ENCODE measurements at regions of chr1 and their contacts with region 1.

Region 1: DNA sequence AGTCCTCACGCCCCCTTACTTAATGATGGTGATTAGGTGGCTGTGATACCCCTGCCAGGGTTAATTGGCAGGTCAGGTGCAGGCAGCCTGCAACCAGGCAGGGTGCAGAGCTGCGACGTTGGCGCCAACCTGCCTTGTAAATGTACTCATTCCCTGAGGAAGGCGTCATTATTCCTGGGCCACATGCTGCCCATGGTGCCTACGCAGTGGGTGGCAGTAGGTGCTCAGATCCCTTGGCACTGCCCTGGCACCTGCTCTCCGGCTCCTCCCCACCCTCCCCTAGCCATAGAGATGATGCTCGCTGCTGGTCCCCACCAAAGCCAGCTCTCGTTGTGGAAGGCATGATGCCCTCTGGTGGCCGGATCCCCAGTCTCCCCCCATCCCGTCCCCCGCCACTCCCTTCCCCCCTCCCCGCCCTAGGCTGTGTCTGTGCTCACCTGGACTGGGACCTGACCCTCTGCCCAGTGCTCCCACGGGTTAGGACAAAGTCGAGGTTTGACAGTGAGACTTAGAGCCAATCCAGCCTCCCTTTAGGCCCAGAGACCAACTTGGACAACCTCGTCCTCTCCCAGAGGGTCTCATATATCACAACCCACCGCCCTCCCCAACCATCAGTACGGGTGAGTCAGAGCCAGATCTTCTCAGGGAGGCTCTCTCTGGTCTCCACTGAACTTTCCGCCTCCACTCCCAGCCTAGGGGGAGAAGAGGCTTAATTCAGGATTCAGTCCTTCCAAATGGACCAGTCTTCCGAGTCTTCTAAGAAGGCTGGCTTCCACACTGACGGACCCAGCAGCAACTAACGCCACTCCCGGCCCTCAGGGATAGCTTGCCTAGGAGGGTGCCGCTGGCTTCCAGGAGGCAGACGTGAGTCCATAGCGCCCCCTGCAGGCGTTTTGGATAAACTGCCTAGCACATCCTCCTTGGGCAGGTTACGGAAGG is 5.7 kb downstream of the KRTCAP2 start:
- DNase-seq: no peak
- ATAC-seq: peak; percentile 93
- H3K4me3 ChIP-seq: no peak overlapping the region
- H3K27ac ChIP-seq: no peak overlapping the region
- H3K4me1 ChIP-seq: peaks cover 9% of the 10 kb centered on the region
- H3K27me3 ChIP-seq: no peaks in the 10 kb centered on the region
- CTCF ChIP-seq: peak; percentile 88 to 98 (median 94)
- EP300 ChIP-seq: no peak
- POLR2A ChIP-seq: no peak
- RAD21 ChIP-seq: peak; percentile 96

Region 2: GRCh38 chr1:155084722-155085503 is 82.5 kb before region 1 on chr1:
- CTCF ChIA-PET with region 1: interaction called, 284 read pairs
- POLR2A ChIA-PET with region 1: interaction called, 10 read pairs
- RAD21 ChIA-PET with region 1: interaction called, 71 read pairs
- SMC1A ChIA-PET with region 1: interaction called, 8 read pairs
- in situ Hi-C with region 1: loop called (anchors 5 kb)
- intact Hi-C with region 1: no loop called
- DNase-seq: peak; percentile 72
- ATAC-seq: peak; percentile 90
- H3K4me3 ChIP-seq: peak overlapping the region; percentile 72
- H3K27ac ChIP-seq: peak overlapping the region; percentile 72
- H3K4me1 ChIP-seq: peaks cover 33% of the 10 kb centered on the region
- H3K27me3 ChIP-seq: peaks cover 17 to 23% of the 10 kb centered on the region in 2 experiments
- CTCF ChIP-seq: peak; percentile 90 to 99 (median 95)
- EP300 ChIP-seq: 0 out of 4 replicates have a peak, but pooled peaks of 1 of the 2 experiments have one; percentile 48
- POLR2A ChIP-seq: no peak; the same call in 1 of the 2 replicates
- RAD21 ChIP-seq: peak; percentile 99

Region 3: GRCh38 chr1:155091071-155091709 is 76.2 kb before region 1 on chr1:
- CTCF ChIA-PET with region 1: interaction called, 284 read pairs
- POLR2A ChIA-PET with region 1: interaction called, 10 read pairs
- RAD21 ChIA-PET with region 1: interaction called, 71 read pairs
- SMC1A ChIA-PET with region 1: interaction called, 37 read pairs
- in situ Hi-C with region 1: loop called (anchors 5 kb)
- intact Hi-C with region 1: loop called (anchors 1 kb)
- DNase-seq: no peak
- ATAC-seq: peak; percentile 88
- H3K4me3 ChIP-seq: no peak overlapping the region
- H3K27ac ChIP-seq: no peak overlapping the region
- H3K4me1 ChIP-seq: peaks cover 6% of the 10 kb centered on the region
- H3K27me3 ChIP-seq: peaks cover 0 to 2% of the 10 kb centered on the region in 2 experiments; a peak in 1 of 4 replicates
- CTCF ChIP-seq: peak; percentile 85 to 98 (median 97)
- EP300 ChIP-seq: no peak
- POLR2A ChIP-seq: no peak
- RAD21 ChIP-seq: peak; percentile 79

Region 4: DNA sequence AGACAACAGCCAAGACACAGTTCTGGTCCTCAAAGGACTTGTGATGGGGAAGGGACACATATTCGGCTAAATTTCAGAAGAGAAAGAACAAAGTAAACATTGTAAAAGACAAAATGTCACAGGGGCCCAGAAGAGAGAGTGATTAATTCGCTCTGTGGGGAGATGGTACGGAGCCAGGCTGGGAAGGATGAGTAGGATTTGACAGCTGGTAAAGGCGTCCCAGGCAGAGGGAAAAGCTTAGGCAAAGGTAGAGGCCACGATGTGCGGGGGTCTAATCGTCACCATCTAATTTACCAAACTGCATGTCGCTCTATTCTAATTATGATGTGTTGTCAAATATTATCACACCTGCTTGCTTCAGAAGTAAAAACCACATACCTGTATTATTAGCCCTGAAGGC is 57.1 kb before region 1 on chr1:
- CTCF ChIA-PET with region 1: interaction called, 11 read pairs
- POLR2A ChIA-PET with region 1: no interaction called
- RAD21 ChIA-PET with region 1: interaction called, 5 read pairs
- SMC1A ChIA-PET with region 1: interaction called, 6 read pairs
- in situ Hi-C with region 1: no loop called
- intact Hi-C with region 1: no loop called
- DNase-seq: no peak
- ATAC-seq: no peak
- H3K4me3 ChIP-seq: no peak overlapping the region
- H3K27ac ChIP-seq: no peak overlapping the region
- H3K4me1 ChIP-seq: no peaks in the 10 kb centered on the region
- H3K27me3 ChIP-seq: no peaks in the 10 kb centered on the region
- CTCF ChIP-seq: no peak
- EP300 ChIP-seq: no peak
- POLR2A ChIP-seq: no peak
- RAD21 ChIP-seq: no peak

Region 5: GRCh38 chr1:155117617-155118016 is 49.8 kb before region 1 on chr1:
- CTCF ChIA-PET with region 1: interaction called, 10 read pairs
- POLR2A ChIA-PET with region 1: no interaction called
- RAD21 ChIA-PET with region 1: interaction called, 5 read pairs
- SMC1A ChIA-PET with region 1: interaction called, 6 read pairs
- in situ Hi-C with region 1: no loop called
- intact Hi-C with region 1: no loop called
- DNase-seq: no peak
- ATAC-seq: no peak
- H3K4me3 ChIP-seq: no peak overlapping the region
- H3K27ac ChIP-seq: no peak overlapping the region
- H3K4me1 ChIP-seq: peaks cover 5% of the 10 kb centered on the region; the same call in 1 of the 2 replicates
- H3K27me3 ChIP-seq: peaks cover 0 to 2% of the 10 kb centered on the region in 2 experiments; a peak in 1 of 4 replicates
- CTCF ChIP-seq: no peak
- EP300 ChIP-seq: no peak
- POLR2A ChIP-seq: no peak
- RAD21 ChIP-seq: no peak

Region 6: DNA sequence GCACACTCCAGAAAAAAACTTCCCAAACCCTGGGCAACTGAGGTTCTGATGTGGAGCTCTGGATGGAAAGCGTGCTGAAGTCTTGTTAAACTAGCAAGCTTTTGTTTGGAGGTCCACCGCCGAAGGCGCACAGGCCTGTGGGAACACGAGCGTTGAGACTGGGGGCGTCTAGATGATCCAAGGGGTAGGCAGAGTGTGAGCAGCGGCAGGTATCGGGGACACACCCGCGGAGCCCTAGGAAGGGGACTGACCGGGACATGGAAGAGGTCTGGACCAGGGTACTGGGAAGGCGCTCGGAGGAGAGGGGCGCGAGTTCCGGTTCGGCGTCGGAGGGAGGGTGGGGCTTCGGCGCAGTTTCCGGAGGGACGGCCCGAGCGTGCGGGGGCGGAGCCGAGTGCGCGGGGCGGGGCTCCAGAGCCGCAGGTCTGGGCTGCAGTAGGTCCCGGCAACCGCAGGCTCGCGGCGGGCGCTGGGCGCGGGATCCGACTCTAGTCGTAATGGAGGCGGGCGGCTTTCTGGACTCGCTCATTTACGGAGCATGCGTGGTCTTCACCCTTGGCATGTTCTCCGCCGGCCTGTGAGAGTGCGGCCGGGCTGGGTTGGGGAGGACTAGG is 31.9 kb before region 1 on chr1 and contains the start of gene SLC50A1:
- CTCF ChIA-PET with region 1: interaction called, 37 read pairs
- POLR2A ChIA-PET with region 1: interaction called, 18 read pairs
- RAD21 ChIA-PET with region 1: interaction called, 7 read pairs
- SMC1A ChIA-PET with region 1: interaction called, 6 read pairs
- in situ Hi-C with region 1: no loop called
- intact Hi-C with region 1: loop called (anchors 5 kb)
- DNase-seq: peak; percentile 66
- ATAC-seq: peak; percentile 89
- H3K4me3 ChIP-seq: peak within 1 kb of the TSS; percentile 90
- H3K27ac ChIP-seq: peak within 1 kb of the TSS; percentile 97
- H3K4me1 ChIP-seq: peaks cover 13% of the 10 kb centered on the region
- H3K27me3 ChIP-seq: no peaks in the 10 kb centered on the region
- CTCF ChIP-seq: no peak
- EP300 ChIP-seq: no peak
- POLR2A ChIP-seq: peak; percentile 93
- RAD21 ChIP-seq: no peak
- polyA plus RNA-seq, gene SLC50A1: 70.8 to 85.6 TPM

Region 7: GRCh38 chr1:155392898-155393411 is 225.5 kb after region 1 on chr1:
- CTCF ChIA-PET with region 1: no interaction called
- POLR2A ChIA-PET with region 1: no interaction called
- RAD21 ChIA-PET with region 1: no interaction called
- SMC1A ChIA-PET with region 1: no interaction called
- in situ Hi-C with region 1: no loop called
- intact Hi-C with region 1: no loop called
- DNase-seq: no peak
- ATAC-seq: no peak
- H3K4me3 ChIP-seq: no peak overlapping the region
- H3K27ac ChIP-seq: no peak overlapping the region
- H3K4me1 ChIP-seq: no peaks in the 10 kb centered on the region
- H3K27me3 ChIP-seq: no peaks in the 10 kb centered on the region
- CTCF ChIP-seq: no peak
- EP300 ChIP-seq: no peak
- POLR2A ChIP-seq: no peak
- RAD21 ChIP-seq: no peak